Panc1 (cell line): ENCODE measurements at regions of chr19 and their contacts with region 1.

Region 1: GRCh38 chr19:39970675-39971379 is at the start of gene PSMC4:
- DNase-seq: peak; percentile 100
- ATAC-seq: peak; percentile 98
- H3K4me3 ChIP-seq: peak within 1 kb of the TSS; percentile 35 to 50
- H3K27ac ChIP-seq: peak within 1 kb of the TSS; percentile 82
- H3K4me1 ChIP-seq: peaks cover 17% of the 10 kb centered on the region
- H3K27me3 ChIP-seq: no peaks in the 10 kb centered on the region
- CTCF ChIP-seq: no peak
- total RNA-seq, gene PSMC4: 2,386 TPM

Region 2: DNA sequence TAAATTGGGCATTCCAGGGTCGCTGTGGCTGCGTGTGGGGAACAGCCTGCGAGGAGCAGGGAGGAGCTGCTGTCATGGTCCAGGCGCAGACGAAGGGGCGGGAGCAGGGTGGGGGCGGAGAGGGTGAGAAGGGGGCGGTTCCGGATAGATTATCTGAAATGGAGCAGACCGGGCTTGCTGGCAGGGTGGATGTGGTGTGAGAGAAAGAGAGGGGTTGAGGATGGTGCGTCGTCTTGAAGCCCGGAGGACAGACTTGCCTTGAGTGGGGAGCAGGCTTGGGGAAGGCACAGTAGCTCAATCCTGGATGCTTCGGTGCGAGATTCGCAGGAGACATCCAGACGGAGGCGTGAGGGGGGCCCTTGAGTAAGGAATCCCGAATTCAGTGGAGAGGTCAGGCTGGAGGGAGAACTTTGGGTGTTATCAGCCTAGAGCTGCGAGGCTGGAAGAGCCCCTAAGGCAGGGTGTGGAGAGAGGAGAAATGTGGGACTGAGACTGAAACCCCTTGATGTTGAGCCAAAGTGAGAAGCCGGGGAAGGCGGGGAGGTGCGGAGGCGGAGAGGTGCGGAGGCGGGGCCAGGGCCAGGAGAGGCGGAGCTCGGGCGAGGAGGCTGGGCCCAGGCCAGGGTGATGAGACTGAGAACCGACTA is 1787.5 kb before region 1 on chr19:
- CTCF ChIA-PET with region 1: no interaction called
- POLR2A ChIA-PET with region 1: no interaction called
- in situ Hi-C with region 1: no loop called
- intact Hi-C with region 1: no loop called
- DNase-seq: no peak
- ATAC-seq: peak; percentile 64; the same call in 1 of the 2 replicates
- H3K4me3 ChIP-seq: no peak overlapping the region
- H3K27ac ChIP-seq: no peak overlapping the region
- H3K4me1 ChIP-seq: no peaks in the 10 kb centered on the region
- H3K27me3 ChIP-seq: no peaks in the 10 kb centered on the region
- CTCF ChIP-seq: no peak

Region 3: DNA sequence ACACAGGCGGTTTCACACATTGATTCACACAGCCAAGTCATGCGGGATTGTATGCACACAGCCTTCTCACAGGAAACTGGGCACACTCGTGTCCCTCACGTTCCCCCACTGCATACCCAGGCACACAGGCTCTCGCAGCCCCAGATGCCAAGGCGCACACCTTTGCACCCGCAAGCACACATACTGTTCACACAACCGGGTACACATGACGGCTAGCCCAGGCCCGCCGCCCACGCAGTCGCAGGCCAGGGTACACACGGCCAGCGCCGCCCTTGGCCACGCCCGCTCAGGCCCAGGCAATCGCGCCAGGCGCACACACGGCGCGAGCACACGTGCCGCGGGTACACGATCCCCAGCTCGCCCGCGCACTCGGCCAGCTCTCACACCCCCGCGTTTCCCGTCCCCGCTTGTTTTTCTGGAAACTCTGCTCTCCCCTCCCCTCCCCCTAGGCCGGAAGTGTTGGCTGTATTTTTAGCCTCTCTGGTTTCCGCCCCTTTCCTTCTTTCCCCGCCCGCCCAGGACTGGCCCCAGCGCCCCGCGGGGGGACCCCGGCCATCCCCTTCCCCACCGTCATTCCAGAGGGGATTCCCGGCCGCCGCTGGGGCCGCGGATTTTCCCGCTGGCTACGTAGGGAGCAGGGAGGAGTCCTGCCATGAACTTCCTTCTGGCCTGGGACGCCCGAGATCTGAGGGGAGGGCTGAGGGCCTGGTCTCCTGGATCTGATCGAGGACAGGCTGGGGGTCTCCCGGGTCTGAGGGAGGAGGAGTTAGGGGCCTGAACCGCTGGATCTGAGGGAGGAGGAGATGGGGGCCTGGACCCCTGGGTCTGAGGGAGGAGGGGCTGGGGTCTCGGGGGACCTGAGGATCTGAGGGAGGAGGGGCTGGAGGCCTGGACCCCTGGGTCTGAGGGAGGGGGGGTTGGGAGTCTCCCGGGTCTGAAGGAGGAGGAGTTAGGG is 568.2 kb before region 1 on chr19:
- CTCF ChIA-PET with region 1: no interaction called
- POLR2A ChIA-PET with region 1: no interaction called
- in situ Hi-C with region 1: no loop called
- intact Hi-C with region 1: no loop called
- DNase-seq: peak; percentile 100
- ATAC-seq: peak; percentile 39
- H3K4me3 ChIP-seq: peak overlapping the region; percentile 34 to 55
- H3K27ac ChIP-seq: peak overlapping the region; percentile 90
- H3K4me1 ChIP-seq: peaks cover 81% of the 10 kb centered on the region
- H3K27me3 ChIP-seq: no peaks in the 10 kb centered on the region
- CTCF ChIP-seq: no peak

Region 4: DNA sequence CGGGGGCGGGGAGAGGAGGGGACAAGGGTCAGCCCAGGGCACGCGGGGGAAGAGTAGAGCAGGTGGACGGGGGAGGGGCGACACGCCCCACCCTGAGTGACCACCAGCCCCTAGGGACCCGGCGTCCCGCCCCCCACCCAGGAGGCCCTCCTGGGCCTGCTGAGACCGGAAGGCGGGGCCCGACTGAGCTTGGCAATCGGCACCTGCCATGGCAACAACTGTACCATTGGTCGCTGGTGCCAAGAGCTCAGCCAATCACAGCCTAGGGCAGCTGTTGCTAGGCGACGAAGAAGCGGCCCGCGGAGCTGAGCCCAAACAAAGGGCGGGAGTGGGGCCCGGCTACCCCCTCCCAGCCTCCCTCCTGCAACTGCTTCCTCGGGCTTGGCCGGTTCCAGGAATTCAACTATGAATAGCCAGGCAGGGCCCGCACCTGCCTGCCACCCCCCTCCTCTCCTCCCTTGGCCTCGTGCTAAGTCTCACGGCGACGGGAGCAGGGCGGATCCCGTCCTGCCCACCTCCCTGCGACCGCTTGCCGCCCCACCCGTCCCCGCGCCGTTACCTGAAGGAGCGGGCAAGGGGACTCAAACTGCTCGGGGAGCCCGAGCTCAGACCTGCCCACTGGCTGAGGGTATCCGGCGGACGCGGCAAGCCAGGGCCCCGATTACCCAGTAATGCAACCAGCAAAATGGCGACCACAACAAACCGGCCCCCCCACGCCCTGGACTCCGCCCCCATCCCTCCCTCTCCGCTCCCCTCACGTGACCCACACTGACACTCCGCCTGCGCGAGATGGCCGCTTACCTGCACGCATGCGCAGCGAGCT is 137.2 kb before region 1 on chr19 and contains the start of gene DYRK1B:
- CTCF ChIA-PET with region 1: interaction called, 27 read pairs
- POLR2A ChIA-PET with region 1: interaction called, 53 read pairs
- in situ Hi-C with region 1: no loop called
- intact Hi-C with region 1: no loop called
- DNase-seq: peak; percentile 100
- ATAC-seq: peak; percentile 94
- H3K4me3 ChIP-seq: peak within 1 kb of the TSS; percentile 36 to 57
- H3K27ac ChIP-seq: peak within 1 kb of the TSS; percentile 76
- H3K4me1 ChIP-seq: peaks cover 26% of the 10 kb centered on the region
- H3K27me3 ChIP-seq: no peaks in the 10 kb centered on the region
- CTCF ChIP-seq: no peak
- total RNA-seq, gene DYRK1B: 322 TPM

Region 5: DNA sequence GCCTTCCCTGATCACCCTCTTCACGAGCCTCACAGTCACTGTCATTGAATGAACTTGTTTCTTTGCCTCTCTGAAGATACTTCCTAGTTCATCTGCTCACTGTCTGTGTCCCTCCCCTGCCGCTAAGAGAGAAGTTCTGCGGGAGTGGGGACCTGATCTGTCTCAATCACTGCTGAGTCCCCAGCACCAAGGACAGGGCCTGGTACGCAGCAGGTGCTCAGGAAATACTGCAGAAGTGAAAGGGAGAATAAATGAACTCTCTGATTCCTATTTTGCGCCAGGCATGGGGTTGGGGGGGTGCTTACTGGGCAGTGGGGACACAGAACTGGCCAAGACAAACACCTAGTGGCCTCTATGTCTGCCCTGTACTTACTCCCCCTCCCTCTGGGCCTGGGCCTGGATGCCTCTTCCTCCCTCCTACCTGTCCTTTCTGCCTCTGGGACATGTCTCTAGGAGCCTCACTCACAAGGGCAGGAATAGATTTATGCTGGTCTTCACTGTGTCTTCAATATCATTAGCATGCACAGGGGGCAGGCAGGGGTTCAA is 53.9 kb before region 1 on chr19:
- CTCF ChIA-PET with region 1: interaction called, 55 read pairs
- POLR2A ChIA-PET with region 1: interaction called, 16 read pairs
- in situ Hi-C with region 1: no loop called
- intact Hi-C with region 1: no loop called
- DNase-seq: no peak
- ATAC-seq: peak; percentile 7; the same call in 1 of the 2 replicates
- H3K4me3 ChIP-seq: no peak overlapping the region
- H3K27ac ChIP-seq: no peak overlapping the region
- H3K4me1 ChIP-seq: no peaks in the 10 kb centered on the region
- H3K27me3 ChIP-seq: no peaks in the 10 kb centered on the region
- CTCF ChIP-seq: no peak

Region 6: GRCh38 chr19:39951686-39952085 is 19.1 kb before region 1 on chr19:
- CTCF ChIA-PET with region 1: interaction called, 20 read pairs
- POLR2A ChIA-PET with region 1: interaction called, 25 read pairs
- in situ Hi-C with region 1: no loop called
- intact Hi-C with region 1: no loop called
- DNase-seq: no peak
- ATAC-seq: peak; percentile 20
- H3K4me3 ChIP-seq: no peak overlapping the region
- H3K27ac ChIP-seq: no peak overlapping the region
- H3K4me1 ChIP-seq: no peaks in the 10 kb centered on the region
- H3K27me3 ChIP-seq: no peaks in the 10 kb centered on the region
- CTCF ChIP-seq: no peak

Region 7: GRCh38 chr19:40055832-40056504 is 85.1 kb after region 1 on chr19 and contains the start of gene ZNF780B:
- CTCF ChIA-PET with region 1: interaction called, 10 read pairs
- POLR2A ChIA-PET with region 1: interaction called, 25 read pairs
- in situ Hi-C with region 1: no loop called
- intact Hi-C with region 1: no loop called
- DNase-seq: peak; percentile 100
- ATAC-seq: peak; percentile 99
- H3K4me3 ChIP-seq: peak within 1 kb of the TSS; percentile 36 to 50
- H3K27ac ChIP-seq: peak within 1 kb of the TSS; percentile 78
- H3K4me1 ChIP-seq: peaks cover 16% of the 10 kb centered on the region
- H3K27me3 ChIP-seq: no peaks in the 10 kb centered on the region
- CTCF ChIP-seq: no peak
- total RNA-seq, gene ZNF780B: 237 TPM

Region 8: GRCh38 chr19:40133491-40133890 is 162.7 kb after region 1 on chr19:
- CTCF ChIA-PET with region 1: no interaction called
- POLR2A ChIA-PET with region 1: no interaction called
- in situ Hi-C with region 1: no loop called
- intact Hi-C with region 1: no loop called
- DNase-seq: no peak
- ATAC-seq: peak; percentile 44
- H3K4me3 ChIP-seq: no peak overlapping the region
- H3K27ac ChIP-seq: no peak overlapping the region
- H3K4me1 ChIP-seq: no peaks in the 10 kb centered on the region
- H3K27me3 ChIP-seq: peaks cover 87% of the 10 kb centered on the region
- CTCF ChIP-seq: no peak

Region 9: GRCh38 chr19:40155749-40156265 is 185.0 kb after region 1 on chr19:
- CTCF ChIA-PET with region 1: interaction called, 14 read pairs
- POLR2A ChIA-PET with region 1: interaction called, 11 read pairs
- in situ Hi-C with region 1: no loop called
- intact Hi-C with region 1: no loop called
- DNase-seq: peak; percentile 99
- ATAC-seq: peak; percentile 90
- H3K4me3 ChIP-seq: peak overlapping the region in 1 of 2 experiments; percentile 5; a peak in 2 of 4 replicates
- H3K27ac ChIP-seq: no peak overlapping the region
- H3K4me1 ChIP-seq: 0 out of 2 replicates have a peak, but pooled peaks cover 2% of the 10 kb centered on the region
- H3K27me3 ChIP-seq: no peaks in the 10 kb centered on the region
- CTCF ChIP-seq: no peak